PC-9 (cell line): ENCODE measurements at regions of chr7 and their contacts with region 1.

Region 1: GRCh38 chr7:105285118-105285874 is 103.4 kb downstream of the SRPK2 start:
- DNase-seq: no peak
- H3K4me3 ChIP-seq: no peak overlapping the region
- H3K27ac ChIP-seq: no peak overlapping the region
- H3K4me1 ChIP-seq: no peaks in the 10 kb centered on the region
- H3K27me3 ChIP-seq: no peaks in the 10 kb centered on the region
- CTCF ChIP-seq: no peak

Region 2: GRCh38 chr7:103967401-103967800 is 1317.9 kb before region 1 on chr7:
- CTCF ChIA-PET with region 1: no interaction called
- POLR2A ChIA-PET with region 1: no interaction called
- intact Hi-C with region 1: no loop called
- DNase-seq: no peak
- H3K4me3 ChIP-seq: no peak overlapping the region
- H3K27ac ChIP-seq: no peak overlapping the region
- H3K4me1 ChIP-seq: no peaks in the 10 kb centered on the region
- H3K27me3 ChIP-seq: no peaks in the 10 kb centered on the region; the same call in 1 of the 2 replicates
- CTCF ChIP-seq: no peak

Region 3: DNA sequence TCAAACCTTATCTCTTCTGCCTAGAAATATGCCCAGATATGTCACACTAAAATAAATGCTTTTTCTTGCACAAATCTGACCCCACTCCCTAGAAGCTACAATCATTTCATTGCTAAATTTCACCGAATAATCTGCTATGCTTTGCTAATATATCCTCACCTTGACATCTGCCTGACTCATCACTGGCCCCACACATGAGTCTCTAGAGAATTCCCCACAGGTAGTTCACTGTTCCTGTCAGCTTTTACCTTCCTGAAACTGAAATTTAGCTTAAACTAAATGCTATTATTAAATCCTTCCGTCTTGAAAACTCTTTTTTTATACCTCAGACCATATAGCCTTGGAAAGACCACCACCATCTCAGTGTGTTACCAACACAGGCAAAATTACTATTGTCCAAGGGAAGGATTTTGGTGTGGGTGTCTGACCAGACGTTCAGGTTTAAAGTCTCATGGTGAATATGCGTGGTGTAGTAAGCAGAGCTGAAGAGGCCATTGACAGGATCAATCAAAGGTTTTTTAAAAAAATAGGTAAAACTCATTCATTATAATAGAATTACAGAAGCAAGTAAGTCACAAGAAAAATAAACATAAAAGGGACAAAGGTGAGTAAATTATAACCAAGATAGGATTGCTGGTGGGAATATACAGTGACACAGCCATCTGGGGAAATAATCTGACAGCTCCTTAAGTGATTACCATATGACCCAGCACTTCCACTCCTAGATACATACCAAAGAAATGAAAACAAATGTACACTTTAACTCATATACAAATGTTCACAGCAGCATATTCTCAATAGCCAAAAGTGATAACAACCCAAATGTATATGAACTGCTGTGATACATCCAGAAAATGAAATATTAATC is 97.8 kb before region 1 on chr7:
- CTCF ChIA-PET with region 1: no interaction called
- POLR2A ChIA-PET with region 1: interaction called, 10 read pairs
- intact Hi-C with region 1: no loop called
- DNase-seq: no peak
- H3K4me3 ChIP-seq: no peak overlapping the region
- H3K27ac ChIP-seq: no peak overlapping the region
- H3K4me1 ChIP-seq: no peaks in the 10 kb centered on the region
- H3K27me3 ChIP-seq: no peaks in the 10 kb centered on the region
- CTCF ChIP-seq: no peak